Heart right ventricle (tissue), 16 donors: ENCODE measurements at regions of chr6 and their contacts with region 1.

Region 1: DNA sequence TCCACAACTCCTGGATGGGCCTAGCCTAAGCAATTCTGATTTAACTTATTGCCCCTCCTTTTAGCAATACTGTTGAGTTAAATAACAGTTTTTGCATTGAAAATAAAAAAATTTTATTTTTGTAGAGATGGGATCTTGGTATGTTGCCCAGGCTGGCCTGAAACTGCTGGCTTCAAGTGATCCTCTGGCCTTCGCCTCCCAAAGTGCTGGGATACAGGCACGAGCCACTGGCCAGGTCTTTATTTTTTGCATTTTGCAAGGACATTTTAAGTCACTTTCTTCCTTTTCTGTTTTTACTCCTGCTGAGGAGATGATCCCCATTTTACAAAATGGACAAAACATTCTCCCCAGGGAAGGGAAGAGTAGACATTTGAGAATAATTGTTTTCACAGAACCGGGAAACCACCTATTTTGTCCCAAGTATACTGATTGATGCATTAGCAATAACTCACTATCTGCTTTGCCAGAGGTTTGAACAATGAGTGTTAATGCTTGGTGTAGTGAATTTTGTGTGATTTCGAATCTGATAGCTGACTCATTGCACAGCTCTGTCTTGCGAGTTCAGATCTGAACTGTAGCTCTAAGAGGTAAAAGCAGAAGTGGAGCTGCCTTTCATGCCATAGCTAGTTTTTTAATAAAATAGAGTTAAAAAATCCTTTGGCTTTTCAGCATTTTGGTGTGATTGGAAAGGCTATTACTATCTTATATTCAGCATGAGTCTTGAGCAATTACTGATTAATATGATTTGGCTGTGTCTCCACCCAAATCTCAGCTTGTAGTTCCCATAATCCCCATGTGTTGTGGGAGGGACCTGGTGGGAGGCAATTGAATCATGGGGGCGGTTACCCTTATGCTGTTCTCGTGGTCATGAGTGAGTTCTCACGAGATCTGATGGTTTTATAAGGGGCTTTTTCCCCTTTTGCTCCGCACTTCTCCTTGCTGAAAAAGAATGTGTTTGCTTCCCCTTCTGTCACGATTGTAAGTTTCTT is 20.9 kb downstream of the IGF2R start:
- DNase-seq: no peak
- ATAC-seq: no peak
- H3K4me3 ChIP-seq: no peak overlapping the region
- H3K27ac ChIP-seq: peak overlapping the region in 2 of 10 donors; percentile 11 to 48
- H3K4me1 ChIP-seq: peaks cover 6 to 82% (median 43%) of the 10 kb centered on the region in 9 donors
- H3K27me3 ChIP-seq: no peaks in the 10 kb centered on the region
- CTCF ChIP-seq: no peak

Region 2: GRCh38 chr6:160002882-160003281 is 13.1 kb after region 1 on chr6:
- intact Hi-C with region 1: loop called in 1 of 10 experiments (anchors 2 kb)
- DNase-seq: no peak
- ATAC-seq: no peak
- H3K4me3 ChIP-seq: no peak overlapping the region
- H3K27ac ChIP-seq: no peak overlapping the region
- H3K4me1 ChIP-seq: peaks cover 0 to 33% (median 19%) of the 10 kb centered on the region in 9 donors
- H3K27me3 ChIP-seq: no peaks in the 10 kb centered on the region
- CTCF ChIP-seq: no peak